ENCODE measurements at regions of chr19 and their contacts with region 1.

Region 1: DNA sequence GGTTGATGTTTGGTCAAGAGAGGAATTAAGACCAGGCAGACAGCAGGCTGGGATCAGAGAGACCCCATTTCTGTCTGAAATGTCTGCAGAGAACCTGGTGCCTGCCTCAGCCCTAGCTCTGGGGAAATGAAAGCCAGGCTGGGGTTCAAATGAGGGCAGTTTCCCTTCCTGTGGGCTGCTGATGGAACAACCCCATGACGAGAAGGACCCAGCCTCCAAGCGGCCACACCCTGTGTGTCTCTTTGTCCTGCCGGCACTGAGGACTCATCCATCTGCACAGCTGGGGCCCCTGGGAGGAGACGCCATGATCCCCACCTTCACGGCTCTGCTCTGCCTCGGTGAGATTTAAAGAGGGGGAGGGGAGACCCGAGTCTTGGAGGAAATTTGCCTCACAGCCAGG is at the start of gene LILRB4:
- DNase-seq: no peak
- H3K4me3 ChIP-seq: no peak within 1 kb of the TSS
- H3K27ac ChIP-seq: no peak within 1 kb of the TSS
- H3K4me1 ChIP-seq: no peaks in the 10 kb centered on the region
- H3K27me3 ChIP-seq: no peaks in the 10 kb centered on the region
- CTCF ChIP-seq: no peak
- POLR2A ChIP-seq: no peak
- total RNA-seq, gene LILRB4: 2.9 TPM

Region 2: DNA sequence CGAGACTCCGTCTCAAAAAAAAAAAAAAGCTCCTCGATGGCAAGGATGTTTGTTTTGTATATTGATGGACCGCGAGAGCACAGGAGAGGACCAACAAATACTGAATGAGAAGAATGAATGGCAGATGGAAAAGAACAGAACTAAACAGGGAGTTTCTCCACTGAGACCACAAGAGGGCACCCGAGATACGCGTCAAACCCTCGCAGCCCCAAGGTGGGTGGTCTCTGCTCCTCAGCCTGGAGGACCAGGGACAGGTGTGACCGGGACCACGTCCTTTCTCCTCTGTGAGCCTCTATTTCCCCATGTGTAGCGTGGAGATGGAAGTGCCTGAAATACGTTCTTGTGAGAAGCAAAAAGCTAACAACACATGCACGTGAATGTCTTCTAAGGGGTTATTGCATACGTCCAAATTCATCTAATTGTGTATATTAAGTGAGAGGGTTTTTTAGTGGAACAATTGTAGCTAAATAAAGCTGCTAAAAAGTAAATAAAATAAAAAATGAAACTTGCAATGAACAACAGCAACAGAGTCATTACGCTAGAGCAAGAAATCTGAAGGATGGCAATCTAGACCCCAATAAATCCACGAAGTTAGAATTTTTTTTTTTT is 181.3 kb before region 1 on chr19:
- intact Hi-C with region 1: loop called (anchors 10 kb)
- DNase-seq: no peak
- H3K4me3 ChIP-seq: no peak overlapping the region
- H3K27ac ChIP-seq: no peak overlapping the region
- H3K4me1 ChIP-seq: no peaks in the 10 kb centered on the region
- H3K27me3 ChIP-seq: no peaks in the 10 kb centered on the region
- CTCF ChIP-seq: peak in 2 of 3 experiments; percentile 27 to 46
- POLR2A ChIP-seq: no peak